ENCODE measurements at regions of chr19 and their contacts with region 1.

Region 1: DNA sequence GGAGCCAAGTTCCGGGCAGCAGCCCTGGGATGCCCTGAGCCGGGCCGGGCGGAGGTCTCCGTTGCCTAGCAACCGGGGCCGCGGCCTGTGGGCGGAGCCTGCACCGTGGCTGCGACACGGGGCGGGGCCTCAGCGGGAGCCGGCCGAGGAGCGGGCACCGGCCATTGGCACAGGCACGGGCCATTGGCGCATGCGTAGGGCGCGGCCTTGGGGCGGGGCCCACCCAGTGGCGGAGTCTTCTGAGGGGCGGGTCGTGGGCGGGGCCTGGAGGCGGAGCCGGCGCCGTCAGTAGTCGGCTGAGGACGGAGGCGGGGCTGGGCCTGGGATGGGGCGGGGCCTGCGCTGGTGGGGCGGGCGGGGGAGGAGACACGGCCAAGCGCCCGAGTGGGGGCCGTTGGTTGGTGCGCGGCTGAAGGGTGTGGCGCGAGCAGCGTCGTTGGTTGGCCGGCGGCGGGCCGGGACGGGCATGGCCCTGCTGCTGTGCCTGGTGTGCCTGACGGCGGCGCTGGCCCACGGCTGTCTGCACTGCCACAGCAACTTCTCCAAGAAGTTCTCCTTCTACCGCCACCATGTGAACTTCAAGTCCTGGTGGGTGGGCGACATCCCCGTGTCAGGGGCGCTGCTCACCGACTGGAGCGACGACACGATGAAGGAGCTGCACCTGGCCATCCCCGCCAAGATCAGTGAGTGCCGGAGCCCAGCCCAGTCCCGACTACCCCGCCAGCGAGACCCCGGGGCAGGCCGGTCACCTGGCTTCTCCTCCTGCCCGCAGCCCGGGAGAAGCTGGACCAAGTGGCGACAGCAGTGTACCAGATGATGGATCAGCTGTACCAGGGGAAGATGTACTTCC is at the start of gene IZUMO4:
- DNase-seq: peak; percentile 99
- ATAC-seq: peak; percentile 78
- H3K4me3 ChIP-seq: peak within 1 kb of the TSS; percentile 75 to 89 (median 83)
- H3K4me3 Mint-ChIP-seq: peak within 1 kb of the TSS; percentile 99
- H3K27ac ChIP-seq: peak within 1 kb of the TSS; percentile 81 to 95
- H3K27ac Mint-ChIP-seq: peak within 1 kb of the TSS; percentile 97
- H3K4me1 ChIP-seq: peaks cover 34 to 49% of the 10 kb centered on the region in 2 donors
- H3K4me1 Mint-ChIP-seq: peaks cover 37% of the 10 kb centered on the region
- H3K27me3 ChIP-seq: no peaks in the 10 kb centered on the region
- H3K27me3 Mint-ChIP-seq: no peaks in the 10 kb centered on the region
- CTCF ChIP-seq: peak; percentile 54
- total RNA-seq, gene IZUMO4: 80.8 and 93.9 TPM in 2 replicates

Region 2: DNA sequence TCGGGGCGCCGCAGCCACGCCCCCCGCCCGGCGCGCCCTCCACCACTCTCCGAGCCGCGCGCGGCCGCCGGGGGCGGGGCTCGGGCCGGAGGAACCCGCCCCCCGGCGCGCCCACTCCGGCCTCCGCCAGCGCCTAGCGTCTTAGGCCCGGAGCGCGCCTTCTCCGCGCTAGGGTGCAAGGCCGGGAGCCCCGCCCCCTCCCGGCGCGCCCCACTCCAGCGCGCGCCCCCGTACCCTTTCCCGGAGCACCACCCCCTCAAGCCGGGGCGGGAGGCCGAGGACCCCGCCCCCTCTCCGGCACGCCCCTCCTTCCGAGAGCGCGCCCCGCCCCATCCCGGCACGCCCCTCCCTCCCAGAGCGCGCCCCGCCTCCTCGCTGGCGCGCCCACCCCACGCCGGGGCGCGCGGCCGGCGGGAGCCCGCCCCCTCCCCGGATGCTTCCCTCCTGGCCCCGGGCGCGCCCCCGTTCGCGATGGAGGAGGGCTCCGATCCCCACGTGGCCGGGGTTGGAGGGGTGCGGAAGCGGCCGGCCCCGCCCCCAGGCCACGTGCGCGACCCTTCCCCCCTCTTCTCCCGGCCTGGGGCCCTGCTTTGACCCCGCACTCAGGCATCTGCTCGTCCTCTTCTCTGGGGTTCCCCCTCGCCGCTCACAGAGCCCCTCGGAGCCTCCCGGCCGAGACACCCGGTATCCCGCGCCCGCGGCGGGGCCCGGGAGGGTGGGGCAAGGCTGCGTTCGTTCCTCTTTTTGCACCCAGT is 232.8 kb before region 1 on chr19:
- CTCF ChIA-PET with region 1: interaction called, 6 read pairs
- POLR2A ChIA-PET with region 1: no interaction called
- intact Hi-C with region 1: loop called (anchors 1 kb)
- DNase-seq: peak; percentile 97
- ATAC-seq: peak; percentile 66
- H3K4me3 ChIP-seq: peak overlapping the region in 4 of 5 experiments; percentile 67 to 90 (median 72)
- H3K4me3 Mint-ChIP-seq: peak overlapping the region; percentile 82
- H3K27ac ChIP-seq: peak overlapping the region; percentile 90 to 95
- H3K27ac Mint-ChIP-seq: peak overlapping the region; percentile 93
- H3K4me1 ChIP-seq: peaks cover 26 to 42% of the 10 kb centered on the region in 2 donors
- H3K4me1 Mint-ChIP-seq: peaks cover 33% of the 10 kb centered on the region
- H3K27me3 ChIP-seq: no peaks in the 10 kb centered on the region
- H3K27me3 Mint-ChIP-seq: no peaks in the 10 kb centered on the region
- CTCF ChIP-seq: no peak

Region 3: DNA sequence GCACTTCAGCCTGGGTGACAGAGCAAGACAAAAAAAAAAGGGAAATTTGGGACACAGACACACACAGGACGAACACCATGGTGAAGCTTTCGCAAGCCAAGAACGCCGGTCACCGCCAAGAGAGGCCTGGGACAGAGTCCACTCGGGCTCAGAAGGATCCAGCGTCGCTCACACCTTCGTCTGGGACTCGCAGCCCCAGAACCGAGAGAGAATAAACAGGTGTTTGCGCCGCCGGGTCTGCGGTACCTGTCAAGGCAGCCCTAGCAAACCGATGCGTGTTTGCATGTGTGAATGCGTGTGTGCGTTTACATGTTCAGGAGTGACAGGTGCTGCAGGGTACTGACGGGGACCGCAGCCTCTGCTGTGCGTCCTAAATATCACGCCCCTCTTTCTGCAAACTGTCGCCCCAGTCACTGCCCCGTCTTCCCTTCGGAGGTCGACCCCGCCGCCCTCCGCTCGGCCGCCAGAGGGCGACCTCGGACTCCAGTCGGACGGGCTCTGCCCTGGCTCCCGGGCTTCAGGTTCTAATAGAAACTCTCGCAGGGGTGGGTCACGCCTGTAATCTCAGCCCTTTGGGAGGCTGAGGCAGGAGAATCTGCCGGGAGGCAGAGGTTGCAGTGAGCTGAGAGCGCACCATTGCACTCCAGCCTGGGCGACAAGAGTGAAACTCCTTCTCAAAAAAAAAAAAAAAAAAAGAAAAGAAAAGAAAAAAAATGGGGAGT is 167.5 kb before region 1 on chr19:
- CTCF ChIA-PET with region 1: no interaction called
- POLR2A ChIA-PET with region 1: interaction called, 5 read pairs
- intact Hi-C with region 1: loop called (anchors 1 kb)
- DNase-seq: peak; percentile 87
- ATAC-seq: peak; percentile 80
- H3K4me3 ChIP-seq: peak overlapping the region in 4 of 5 experiments; percentile 40 to 63 (median 48)
- H3K4me3 Mint-ChIP-seq: peak overlapping the region; percentile 84
- H3K27ac ChIP-seq: no peak overlapping the region
- H3K27ac Mint-ChIP-seq: peak overlapping the region; percentile 80
- H3K4me1 ChIP-seq: peaks cover 33 to 47% of the 10 kb centered on the region in 2 donors
- H3K4me1 Mint-ChIP-seq: peaks cover 44% of the 10 kb centered on the region
- H3K27me3 ChIP-seq: no peaks in the 10 kb centered on the region
- H3K27me3 Mint-ChIP-seq: no peaks in the 10 kb centered on the region
- CTCF ChIP-seq: peak; percentile 96

Region 4: DNA sequence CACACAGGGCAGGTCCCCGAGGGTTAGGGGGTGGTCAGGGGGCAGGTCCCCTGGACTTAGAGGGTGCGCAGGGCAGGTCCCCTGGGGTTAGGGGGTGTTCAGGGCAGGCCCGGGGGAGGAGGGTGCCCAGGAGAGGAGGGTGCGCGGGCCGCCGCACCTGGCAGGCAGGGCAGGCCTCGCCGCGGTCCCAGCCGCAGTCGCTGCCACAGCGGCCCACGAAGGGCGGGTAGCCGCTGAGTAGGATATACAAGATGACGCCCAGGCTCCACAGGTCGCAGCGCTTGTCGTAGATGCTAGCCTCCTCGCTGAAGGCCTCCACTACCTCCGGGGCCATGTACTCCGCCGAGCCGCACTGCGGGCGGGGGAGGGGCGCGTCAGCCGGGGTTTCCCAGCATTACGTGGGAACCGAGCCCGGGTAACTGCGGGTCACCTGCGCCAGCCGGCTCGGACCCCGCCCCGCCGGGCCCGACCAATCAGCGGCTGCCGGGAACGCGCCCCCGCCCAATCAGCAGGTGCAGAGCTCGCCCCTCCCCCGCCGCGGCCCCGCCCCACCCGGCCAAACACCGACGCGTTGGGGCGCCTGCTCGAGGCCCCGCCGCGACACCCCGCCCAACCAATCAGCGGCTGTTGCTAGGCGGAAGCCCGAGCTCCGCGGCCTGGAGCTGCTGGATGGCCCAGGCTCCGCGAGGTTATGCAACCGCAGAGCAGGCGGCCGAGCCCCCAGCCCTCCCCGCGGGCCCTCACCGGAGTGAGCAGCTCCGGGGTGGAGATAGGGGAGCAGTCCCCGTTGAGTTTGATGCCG is 54.8 kb before region 1 on chr19:
- CTCF ChIA-PET with region 1: interaction called, 4 read pairs
- POLR2A ChIA-PET with region 1: interaction called, 111 read pairs
- intact Hi-C with region 1: no loop called
- DNase-seq: peak; percentile 98
- ATAC-seq: peak; percentile 73
- H3K4me3 ChIP-seq: peak overlapping the region in 4 of 5 experiments; percentile 32 to 55 (median 42)
- H3K4me3 Mint-ChIP-seq: peak overlapping the region; percentile 74
- H3K27ac ChIP-seq: peak overlapping the region; percentile 98 to 99
- H3K27ac Mint-ChIP-seq: peak overlapping the region; percentile 87
- H3K4me1 ChIP-seq: peaks cover 54 to 67% of the 10 kb centered on the region in 2 donors
- H3K4me1 Mint-ChIP-seq: peaks cover 63% of the 10 kb centered on the region
- H3K27me3 ChIP-seq: no peaks in the 10 kb centered on the region
- H3K27me3 Mint-ChIP-seq: no peaks in the 10 kb centered on the region
- CTCF ChIP-seq: no peak

Region 5: DNA sequence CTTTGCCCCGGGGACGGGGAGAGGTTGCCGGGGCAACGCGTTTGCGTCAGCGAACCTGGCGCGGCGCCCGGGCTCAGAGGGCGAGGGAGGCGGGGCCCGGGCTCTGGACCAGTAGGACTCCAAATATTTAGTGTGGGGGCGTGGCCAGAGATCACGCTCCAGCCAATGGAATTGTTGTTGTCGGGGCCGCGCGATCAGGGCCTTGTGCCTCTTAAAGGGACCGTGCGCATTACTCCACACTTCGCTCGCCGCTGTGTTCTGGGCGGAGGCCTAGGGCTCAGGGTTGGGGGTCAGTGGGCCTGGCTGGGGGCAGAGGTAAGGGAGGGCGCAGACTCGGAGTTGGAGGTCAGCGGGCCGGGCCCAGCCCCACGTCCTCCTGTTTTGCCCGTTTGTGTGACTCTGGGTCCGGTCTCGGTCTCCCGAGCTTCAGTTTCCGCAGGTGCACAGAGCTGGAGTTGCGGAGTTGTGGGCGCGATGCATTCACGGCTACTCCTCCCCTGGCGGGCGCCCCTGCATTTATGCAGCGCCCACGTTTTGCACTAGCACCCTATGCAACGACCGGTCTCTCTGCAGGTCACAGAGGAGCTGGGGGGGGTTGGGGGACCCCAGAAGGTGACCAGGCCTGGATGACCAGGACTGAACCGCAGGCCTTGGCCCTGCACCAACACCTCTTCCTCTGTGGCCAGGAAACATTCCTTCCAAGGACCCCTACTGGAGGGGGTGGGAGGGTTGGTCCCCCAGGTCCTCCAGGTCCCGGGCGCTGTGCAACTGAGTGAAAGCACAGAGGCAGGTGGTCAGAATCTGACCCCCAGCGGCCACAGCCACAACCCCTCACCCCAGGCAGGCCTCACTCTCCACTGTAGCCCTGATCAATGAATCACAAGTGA is 35.0 kb before region 1 on chr19:
- CTCF ChIA-PET with region 1: interaction called, 96 read pairs
- POLR2A ChIA-PET with region 1: interaction called, 24 read pairs
- intact Hi-C with region 1: loop called (anchors 1 kb)
- DNase-seq: peak; percentile 99
- ATAC-seq: peak; percentile 92
- H3K4me3 ChIP-seq: peak overlapping the region; percentile 8 to 94 (median 84)
- H3K4me3 Mint-ChIP-seq: peak overlapping the region; percentile 95
- H3K27ac ChIP-seq: peak overlapping the region; percentile 92 to 97
- H3K27ac Mint-ChIP-seq: peak overlapping the region; percentile 95
- H3K4me1 ChIP-seq: peaks cover 30 to 67% of the 10 kb centered on the region in 2 donors
- H3K4me1 Mint-ChIP-seq: peaks cover 44% of the 10 kb centered on the region
- H3K27me3 ChIP-seq: no peaks in the 10 kb centered on the region
- H3K27me3 Mint-ChIP-seq: no peaks in the 10 kb centered on the region
- CTCF ChIP-seq: no peak

Region 6: GRCh38 chr19:2084993-2085720 is 11.5 kb before region 1 on chr19:
- CTCF ChIA-PET with region 1: interaction called, 54 read pairs
- POLR2A ChIA-PET with region 1: interaction called, 114 read pairs
- intact Hi-C with region 1: loop called (anchors 1 kb)
- DNase-seq: peak; percentile 97
- ATAC-seq: peak; percentile 29
- H3K4me3 ChIP-seq: peak overlapping the region; percentile 87 to 100 (median 98)
- H3K4me3 Mint-ChIP-seq: peak overlapping the region; percentile 92
- H3K27ac ChIP-seq: peak overlapping the region; percentile 96 to 99
- H3K27ac Mint-ChIP-seq: peak overlapping the region; percentile 99
- H3K4me1 ChIP-seq: peaks cover 74 to 81% of the 10 kb centered on the region in 2 donors
- H3K4me1 Mint-ChIP-seq: peaks cover 79% of the 10 kb centered on the region
- H3K27me3 ChIP-seq: no peaks in the 10 kb centered on the region
- H3K27me3 Mint-ChIP-seq: no peaks in the 10 kb centered on the region
- CTCF ChIP-seq: no peak

Region 7: GRCh38 chr19:2168619-2169424 is 72.1 kb after region 1 on chr19:
- CTCF ChIA-PET with region 1: no interaction called
- POLR2A ChIA-PET with region 1: interaction called, 13 read pairs
- intact Hi-C with region 1: no loop called
- DNase-seq: peak; percentile 81
- ATAC-seq: peak; percentile 44
- H3K4me3 ChIP-seq: peak overlapping the region; percentile 16 to 64 (median 37)
- H3K4me3 Mint-ChIP-seq: peak overlapping the region; percentile 88
- H3K27ac ChIP-seq: peak overlapping the region; percentile 90 to 95
- H3K27ac Mint-ChIP-seq: peak overlapping the region; percentile 95
- H3K4me1 ChIP-seq: peaks cover 66 to 88% of the 10 kb centered on the region in 2 donors
- H3K4me1 Mint-ChIP-seq: peaks cover 69% of the 10 kb centered on the region
- H3K27me3 ChIP-seq: no peaks in the 10 kb centered on the region
- H3K27me3 Mint-ChIP-seq: no peaks in the 10 kb centered on the region
- CTCF ChIP-seq: no peak